ENCODE measurements at regions of chr2 and their contacts with region 1.

Region 1: GRCh38 chr2:100262555-100263320 is 59.6 kb downstream of the LONRF2 start:
- DNase-seq: peak; percentile 37 to 49 (median 46)
- H3K4me3 ChIP-seq: no peak overlapping the region
- H3K4me3 Mint-ChIP-seq: no peak overlapping the region
- H3K27ac ChIP-seq: no peak overlapping the region
- H3K27ac Mint-ChIP-seq: no peak overlapping the region
- H3K4me1 ChIP-seq: no peaks in the 10 kb centered on the region
- H3K4me1 Mint-ChIP-seq: no peaks in the 10 kb centered on the region
- H3K27me3 ChIP-seq: no peaks in the 10 kb centered on the region
- H3K27me3 Mint-ChIP-seq: peaks cover 0 to 1% of the 10 kb centered on the region in 2 donors

Region 2: GRCh38 chr2:100161945-100162620 is 100.7 kb before region 1 on chr2:
- CTCF ChIA-PET with region 1: no interaction called
- POLR2A ChIA-PET with region 1: no interaction called
- intact Hi-C with region 1: no loop called
- DNase-seq: no peak
- H3K4me3 ChIP-seq: no peak overlapping the region
- H3K4me3 Mint-ChIP-seq: no peak overlapping the region
- H3K27ac ChIP-seq: no peak overlapping the region
- H3K27ac Mint-ChIP-seq: no peak overlapping the region
- H3K4me1 ChIP-seq: no peaks in the 10 kb centered on the region
- H3K4me1 Mint-ChIP-seq: no peaks in the 10 kb centered on the region
- H3K27me3 ChIP-seq: no peaks in the 10 kb centered on the region
- H3K27me3 Mint-ChIP-seq: peaks cover 5 to 8% of the 10 kb centered on the region in 2 donors

Region 3: GRCh38 chr2:100235098-100235497 is 27.6 kb before region 1 on chr2:
- CTCF ChIA-PET with region 1: interaction called, 10 read pairs
- POLR2A ChIA-PET with region 1: no interaction called
- intact Hi-C with region 1: no loop called
- DNase-seq: peak; percentile 37 to 65 (median 53)
- H3K4me3 ChIP-seq: no peak overlapping the region
- H3K4me3 Mint-ChIP-seq: peak overlapping the region in 6 of 8 donors; percentile 49 to 61 (median 54)
- H3K27ac ChIP-seq: peak overlapping the region; percentile 1
- H3K27ac Mint-ChIP-seq: peak overlapping the region; percentile 54 to 90 (median 86)
- H3K4me1 ChIP-seq: peaks cover 28% of the 10 kb centered on the region
- H3K4me1 Mint-ChIP-seq: peaks cover 11 to 36% (median 17%) of the 10 kb centered on the region in 4 donors
- H3K27me3 ChIP-seq: no peaks in the 10 kb centered on the region
- H3K27me3 Mint-ChIP-seq: peaks cover 0 to 2% of the 10 kb centered on the region in 2 donors

Region 4: GRCh38 chr2:100285691-100286090 is 23.0 kb after region 1 on chr2:
- CTCF ChIA-PET with region 1: interaction called, 22 read pairs
- POLR2A ChIA-PET with region 1: no interaction called
- intact Hi-C with region 1: no loop called
- DNase-seq: no peak
- H3K4me3 ChIP-seq: no peak overlapping the region
- H3K4me3 Mint-ChIP-seq: no peak overlapping the region
- H3K27ac ChIP-seq: no peak overlapping the region
- H3K27ac Mint-ChIP-seq: no peak overlapping the region
- H3K4me1 ChIP-seq: peaks cover 19% of the 10 kb centered on the region
- H3K4me1 Mint-ChIP-seq: peaks cover 0 to 14% (median 2%) of the 10 kb centered on the region in 4 donors
- H3K27me3 ChIP-seq: no peaks in the 10 kb centered on the region
- H3K27me3 Mint-ChIP-seq: peaks cover 5 to 12% of the 10 kb centered on the region in 2 donors

Region 5: DNA sequence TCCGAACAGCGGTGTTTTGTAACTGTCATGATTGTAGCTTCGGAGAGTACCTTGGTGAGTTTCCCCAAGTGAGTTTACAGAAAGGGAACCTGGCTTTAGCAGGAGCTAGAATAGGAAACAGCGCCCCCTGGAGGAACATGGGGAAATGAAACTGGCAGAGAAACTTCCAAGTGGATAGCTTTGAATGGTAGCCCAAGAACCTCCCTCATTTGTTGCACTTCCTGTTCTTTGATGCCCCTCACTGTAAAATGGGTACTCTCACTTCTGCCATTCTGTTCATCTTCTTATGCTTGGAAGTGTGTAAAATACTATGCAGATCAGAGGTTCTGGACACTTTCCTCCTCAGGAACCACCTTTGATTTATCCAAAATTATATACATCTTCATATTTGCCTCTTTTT is 118.5 kb after region 1 on chr2:
- CTCF ChIA-PET with region 1: interaction called, 70 read pairs
- POLR2A ChIA-PET with region 1: no interaction called
- intact Hi-C with region 1: no loop called
- DNase-seq: peak in 4 of 5 donors; percentile 38 to 57 (median 54)
- H3K4me3 ChIP-seq: no peak overlapping the region
- H3K4me3 Mint-ChIP-seq: no peak overlapping the region
- H3K27ac ChIP-seq: no peak overlapping the region
- H3K27ac Mint-ChIP-seq: no peak overlapping the region
- H3K4me1 ChIP-seq: no peaks in the 10 kb centered on the region
- H3K4me1 Mint-ChIP-seq: peaks cover 0 to 1% (median 0%) of the 10 kb centered on the region in 4 donors
- H3K27me3 ChIP-seq: no peaks in the 10 kb centered on the region
- H3K27me3 Mint-ChIP-seq: peaks cover 2 to 11% of the 10 kb centered on the region in 2 donors

Region 6: DNA sequence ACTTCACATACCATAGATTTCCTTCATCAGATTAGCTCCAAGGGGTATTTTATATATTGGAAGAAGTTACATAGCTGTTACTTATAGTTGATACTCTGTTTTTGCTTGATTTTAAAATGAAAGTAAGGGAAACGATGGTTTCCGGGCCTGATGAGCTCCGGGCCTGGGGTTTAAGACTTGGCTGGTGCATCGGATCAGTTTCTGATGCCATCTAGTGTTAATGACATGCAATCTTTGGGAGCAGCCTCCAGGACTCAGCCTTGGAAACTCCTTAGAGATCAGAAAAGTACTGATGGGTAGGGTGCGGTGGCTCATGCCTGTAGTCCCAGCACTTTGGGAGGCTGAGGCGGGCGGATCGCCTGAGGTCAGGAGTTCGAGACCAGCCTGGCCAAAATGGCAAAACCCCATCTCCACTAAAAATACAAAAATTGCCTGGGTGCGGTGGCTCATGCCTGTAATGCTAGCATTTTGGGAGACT is 942.8 kb after region 1 on chr2:
- CTCF ChIA-PET with region 1: no interaction called
- POLR2A ChIA-PET with region 1: no interaction called
- intact Hi-C with region 1: loop called (anchors 2 kb)
- DNase-seq: peak in 4 of 5 donors; percentile 37 to 57 (median 56)
- H3K4me3 ChIP-seq: no peak overlapping the region
- H3K4me3 Mint-ChIP-seq: peak overlapping the region; percentile 55 to 87 (median 72)
- H3K27ac ChIP-seq: no peak overlapping the region
- H3K27ac Mint-ChIP-seq: peak overlapping the region; percentile 68 to 90 (median 83)
- H3K4me1 ChIP-seq: peaks cover 4% of the 10 kb centered on the region
- H3K4me1 Mint-ChIP-seq: peaks cover 2 to 14% (median 12%) of the 10 kb centered on the region in 4 donors
- H3K27me3 ChIP-seq: no peaks in the 10 kb centered on the region
- H3K27me3 Mint-ChIP-seq: no peaks in the 10 kb centered on the region

Measured in CD4-positive, alpha-beta memory T cell (primary cell).